ENCODE measurements at regions of chr11 and their contacts with region 1.

Region 1: DNA sequence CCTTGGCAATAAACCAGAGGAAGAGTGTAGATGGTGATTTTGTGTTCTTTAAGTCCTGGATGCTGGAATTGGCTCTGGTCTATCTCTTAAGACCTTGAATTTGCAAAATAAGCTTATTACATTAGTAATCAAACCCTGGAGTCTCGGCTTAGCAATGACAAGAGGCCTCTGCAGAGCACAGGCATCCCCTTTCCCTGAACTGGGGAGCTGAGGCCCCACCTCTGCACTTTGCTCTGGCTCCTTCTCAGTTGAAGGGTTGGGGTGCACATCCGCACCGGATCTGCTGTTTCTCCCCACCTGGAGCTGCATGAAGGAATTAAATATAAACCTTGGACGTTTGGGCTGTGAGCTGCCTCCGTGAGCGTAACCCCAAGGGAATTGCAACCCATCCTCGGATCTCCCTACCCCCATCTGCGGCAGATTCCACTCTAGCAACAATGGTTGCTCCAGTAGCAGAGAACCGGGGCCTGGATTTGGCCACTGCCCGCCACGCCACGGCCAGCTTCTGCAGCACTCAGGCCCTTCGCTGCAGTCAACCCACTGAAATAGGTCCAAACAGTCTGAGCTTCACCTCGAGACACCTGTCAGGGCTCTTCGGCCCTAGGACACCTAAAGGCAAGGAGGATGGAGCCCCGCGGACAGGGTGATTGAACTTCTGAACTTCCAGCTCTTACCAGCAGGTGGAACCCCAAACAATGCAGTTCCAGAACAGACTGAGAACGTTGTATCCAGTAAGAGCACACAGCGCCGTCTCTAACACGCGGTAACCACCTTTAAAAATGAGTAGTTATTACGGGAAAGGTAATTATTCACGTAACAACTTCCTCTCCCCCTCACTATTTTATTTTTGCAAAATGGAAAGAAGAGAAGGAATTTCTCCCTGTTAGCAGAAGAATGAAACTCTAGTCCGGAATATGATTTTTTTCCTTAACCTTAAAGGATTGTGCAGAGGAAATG is 54.8 kb upstream of the CAPRIN1 start:
- DNase-seq: peak; percentile 75 to 83 (median 81)
- ATAC-seq: peak; percentile 99
- H3K4me3 ChIP-seq: no peak overlapping the region
- H3K27ac ChIP-seq: no peak overlapping the region
- H3K4me1 ChIP-seq: peaks cover 8% of the 10 kb centered on the region
- H3K27me3 ChIP-seq: no peaks in the 10 kb centered on the region
- CTCF ChIP-seq: peak; percentile 52 to 87 (median 83)
- POLR2A ChIP-seq: no peak

Region 2: DNA sequence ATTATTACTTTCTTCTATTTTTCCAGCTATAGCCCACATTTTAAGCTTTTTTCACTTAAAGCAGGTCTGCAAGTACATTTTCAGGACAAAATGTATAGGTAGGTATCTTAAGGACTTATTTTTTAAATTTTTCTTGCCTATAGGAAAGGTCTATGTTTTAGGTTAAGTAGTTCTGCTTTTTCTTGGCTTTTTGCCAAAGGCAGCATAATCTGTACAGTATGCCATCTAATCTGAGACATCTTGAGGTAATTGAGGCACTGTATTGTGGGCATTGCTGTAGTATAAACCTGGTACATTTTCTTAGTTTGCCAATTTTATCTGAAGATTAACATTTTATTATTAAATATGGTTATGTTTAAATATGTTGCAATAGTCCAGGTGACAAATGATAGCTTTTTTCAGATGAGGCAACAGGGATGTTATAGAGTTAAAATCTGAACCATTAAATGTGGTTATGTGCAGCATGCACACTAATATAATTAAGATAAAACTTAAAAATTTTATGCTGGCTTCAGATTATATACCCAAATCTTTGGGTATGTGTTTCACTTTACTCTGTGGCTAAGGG is 1061.2 kb before region 1 on chr11:
- intact Hi-C with region 1: no loop called
- DNase-seq: no peak
- ATAC-seq: no peak
- H3K4me3 ChIP-seq: no peak overlapping the region
- H3K27ac ChIP-seq: no peak overlapping the region
- H3K4me1 ChIP-seq: no peaks in the 10 kb centered on the region
- H3K27me3 ChIP-seq: no peaks in the 10 kb centered on the region
- CTCF ChIP-seq: no peak
- POLR2A ChIP-seq: no peak

Region 3: GRCh38 chr11:34055218-34056000 is 58.6 kb after region 1 on chr11:
- intact Hi-C with region 1: loop called (anchors 5 kb)
- DNase-seq: no peak
- ATAC-seq: no peak
- H3K4me3 ChIP-seq: no peak overlapping the region
- H3K27ac ChIP-seq: peak overlapping the region in 1 of 4 donors; percentile 13
- H3K4me1 ChIP-seq: peaks cover 64% of the 10 kb centered on the region
- H3K27me3 ChIP-seq: no peaks in the 10 kb centered on the region
- CTCF ChIP-seq: no peak
- POLR2A ChIP-seq: no peak

Region 4: GRCh38 chr11:34161812-34162499 is 165.2 kb after region 1 on chr11:
- intact Hi-C with region 1: loop called (anchors 10 kb)
- DNase-seq: no peak
- ATAC-seq: no peak
- H3K4me3 ChIP-seq: no peak overlapping the region
- H3K27ac ChIP-seq: no peak overlapping the region
- H3K4me1 ChIP-seq: no peaks in the 10 kb centered on the region
- H3K27me3 ChIP-seq: no peaks in the 10 kb centered on the region
- CTCF ChIP-seq: no peak
- POLR2A ChIP-seq: no peak